Right ventricle myocardium inferior (tissue), 1 donor: ENCODE measurements at regions of chr16 and their contacts with region 1.

Region 1: GRCh38 chr16:87278191-87279095 is 38.7 kb downstream of the C16orf95 start:
- DNase-seq: peak; percentile 88
- ATAC-seq: peak; percentile 94

Region 2: GRCh38 chr16:87012954-87013946 is 265.2 kb before region 1 on chr16:
- intact Hi-C with region 1: no loop called
- DNase-seq: no peak
- ATAC-seq: peak; percentile 54

Region 3: GRCh38 chr16:87062569-87063442 is 215.6 kb before region 1 on chr16:
- intact Hi-C with region 1: loop called (anchors 1 kb)
- DNase-seq: peak; percentile 83
- ATAC-seq: peak; percentile 91

Region 4: DNA sequence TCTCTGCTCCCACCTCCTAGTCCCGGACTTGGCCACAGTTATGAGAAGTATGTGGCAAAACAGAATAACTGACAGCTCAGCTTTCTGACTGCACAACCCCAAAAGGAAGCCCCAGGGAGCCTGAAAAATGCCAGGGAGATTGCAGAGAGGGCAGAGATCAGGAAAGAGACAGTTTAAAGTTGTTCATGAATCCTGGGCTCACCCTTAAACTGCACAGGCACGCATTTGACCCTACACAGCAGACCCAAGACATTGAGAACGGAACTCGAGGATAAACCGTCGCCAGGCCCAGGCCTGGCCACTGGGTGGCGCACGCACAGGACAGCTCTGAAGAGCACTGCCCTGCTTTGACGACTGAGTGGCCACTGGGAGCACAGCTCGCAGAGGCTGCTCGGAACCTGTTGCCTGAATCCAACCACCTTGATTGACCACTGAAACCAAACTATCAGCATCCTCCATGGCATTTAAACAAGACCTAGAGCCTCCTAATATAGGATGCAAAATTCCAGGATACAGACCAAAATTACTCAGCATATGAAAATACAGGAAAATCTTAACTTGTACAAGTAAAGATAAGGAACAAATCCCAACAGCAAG is 75.3 kb before region 1 on chr16:
- intact Hi-C with region 1: loop called (anchors 10 kb)
- DNase-seq: no peak
- ATAC-seq: peak; percentile 56

Region 5: GRCh38 chr16:87216474-87217275 is 61.8 kb before region 1 on chr16:
- intact Hi-C with region 1: no loop called
- DNase-seq: no peak
- ATAC-seq: no peak

Region 6: GRCh38 chr16:87332150-87332549 is 53.7 kb after region 1 on chr16:
- intact Hi-C with region 1: no loop called
- DNase-seq: peak; percentile 60
- ATAC-seq: no peak

Region 7: DNA sequence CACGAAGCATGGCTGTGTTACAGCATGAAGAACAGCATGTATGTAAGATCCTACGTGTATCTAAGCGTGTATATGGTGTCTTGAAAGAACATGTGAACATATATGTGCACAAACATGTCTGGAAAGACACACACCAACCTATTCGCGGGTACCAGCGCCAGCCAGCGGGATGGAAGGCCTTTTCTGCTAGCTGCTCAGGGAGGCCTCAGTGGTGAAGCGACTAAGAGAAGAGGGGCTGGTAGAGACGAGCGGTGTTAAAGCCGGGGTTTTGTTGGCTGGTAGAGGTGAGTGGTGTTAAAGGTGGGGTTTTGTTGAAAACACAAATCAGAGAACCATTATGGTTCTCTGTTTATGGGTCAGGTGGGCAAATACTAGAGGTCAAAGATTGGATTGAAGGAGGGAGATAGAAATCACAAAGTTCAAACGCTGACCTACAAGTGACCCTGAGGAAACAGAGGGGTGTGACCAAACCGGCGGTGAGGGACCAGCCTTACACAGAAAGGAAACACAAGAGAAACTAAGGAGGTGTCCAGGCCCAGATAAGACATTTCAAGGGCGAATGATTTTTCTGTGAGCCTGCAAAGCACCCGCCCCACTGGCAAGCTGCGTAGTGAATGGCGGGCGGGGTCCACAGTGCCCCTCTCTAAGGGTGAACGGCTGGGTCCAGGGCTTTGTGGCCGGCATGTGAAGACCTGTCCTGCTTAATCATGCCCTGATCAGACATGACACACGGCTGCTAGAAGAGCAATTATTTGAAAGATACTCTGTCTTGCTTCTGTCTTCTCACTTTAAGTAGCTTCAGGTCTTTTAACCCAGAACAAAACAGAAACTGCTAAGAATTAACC is 206.3 kb after region 1 on chr16:
- intact Hi-C with region 1: no loop called
- DNase-seq: no peak
- ATAC-seq: no peak